AG04449 (cell line): ENCODE measurements at regions of chr3 and their contacts with region 1.

Region 1: DNA sequence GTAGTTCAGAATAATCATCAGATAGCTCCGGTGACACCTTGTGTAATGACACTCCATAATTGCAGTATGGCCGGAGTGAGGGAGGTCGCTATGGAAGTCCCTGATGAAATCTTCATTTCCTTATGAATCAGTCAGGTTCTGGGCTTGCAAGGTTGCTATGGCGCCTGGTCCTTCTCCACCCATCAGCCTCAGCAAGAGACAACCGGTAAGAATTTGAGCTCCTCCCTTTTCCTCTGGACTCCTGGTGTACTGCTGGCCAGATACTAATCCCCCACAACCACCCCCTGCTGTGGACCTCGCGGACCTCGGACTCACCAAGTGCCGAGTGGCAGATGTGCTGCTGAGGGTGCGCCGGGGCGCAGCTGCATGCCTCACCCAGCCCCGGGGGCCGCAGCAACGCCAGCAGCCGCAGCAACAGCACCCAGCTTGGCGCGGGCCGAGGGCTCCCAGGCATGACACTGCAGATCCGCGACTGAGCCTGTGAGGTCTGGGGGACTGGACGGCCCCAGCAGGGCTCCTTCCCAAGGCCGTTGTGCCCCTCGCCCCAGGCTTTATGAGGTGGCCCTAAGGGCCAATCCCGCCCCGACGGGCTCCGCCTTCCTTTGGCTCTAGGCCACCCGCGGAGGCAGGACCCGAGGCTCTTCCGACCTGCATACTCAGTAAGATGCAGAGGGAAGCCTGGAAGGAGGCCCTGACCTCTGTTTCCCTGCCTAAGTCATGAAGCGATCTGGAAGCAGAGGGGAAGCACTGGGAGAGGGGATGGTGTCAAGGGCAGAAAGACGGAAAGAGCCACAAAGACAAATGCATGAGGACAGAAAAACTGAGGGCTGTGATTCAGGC is at the start of gene TIMP4:
- DNase-seq: no peak
- H3K4me3 ChIP-seq: peak within 1 kb of the TSS; percentile 37
- CTCF ChIP-seq: no peak

Region 2: DNA sequence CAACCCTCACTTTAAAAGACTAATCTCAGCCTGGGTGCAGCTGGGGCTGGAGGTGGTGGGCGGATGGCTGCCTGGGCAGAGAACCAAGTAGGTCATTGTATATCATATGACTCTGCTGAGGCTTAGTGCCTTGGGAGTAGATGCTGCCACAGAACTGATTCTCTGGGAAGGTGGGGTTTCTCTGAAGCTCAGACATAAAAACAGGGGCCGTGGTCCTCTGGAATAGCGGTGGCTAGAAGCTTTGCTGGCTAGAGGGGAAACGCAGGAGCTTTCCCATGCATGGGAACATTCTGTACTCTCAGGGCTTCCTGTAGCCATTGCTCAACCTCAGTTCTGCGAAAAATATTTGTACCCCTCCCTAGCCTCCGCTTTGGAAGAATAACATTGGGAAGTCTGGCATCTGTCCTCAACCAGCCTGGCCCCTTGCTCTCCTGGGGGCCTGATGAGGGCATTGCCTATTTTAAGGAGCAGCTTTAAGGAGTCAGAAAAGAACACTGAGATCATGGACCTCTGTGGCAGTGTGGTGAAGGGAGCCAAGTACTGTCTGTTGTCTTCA is 14.6 kb before region 1 on chr3:
- CTCF ChIA-PET with region 1: interaction called, 15 read pairs
- POLR2A ChIA-PET with region 1: no interaction called
- DNase-seq: peak; percentile 12
- H3K4me3 ChIP-seq: no peak overlapping the region
- CTCF ChIP-seq: no peak